GM12878 (cell line): ENCODE measurements at regions of chr16 and their contacts with region 1.

Region 1: GRCh38 chr16:67183627-67184328 is at the start of gene MATCAP1:
- DNase-seq: peak; percentile 91
- ATAC-seq: peak; percentile 96
- H3K4me3 ChIP-seq: peak within 1 kb of the TSS; percentile 76
- H3K27ac ChIP-seq: peak within 1 kb of the TSS; percentile 84
- H3K4me1 ChIP-seq: peaks cover 4% of the 10 kb centered on the region
- H3K27me3 ChIP-seq: peaks cover 0 to 3% of the 10 kb centered on the region in 2 experiments; a peak in 2 of 4 replicates
- CTCF ChIP-seq: no peak
- EP300 ChIP-seq: no peak
- POLR2A ChIP-seq: peak; percentile 76
- RAD21 ChIP-seq: no peak
- polyA plus RNA-seq, gene MATCAP1: 2.8 to 6.6 TPM

Region 2: GRCh38 chr16:66954097-66954659 is 229.6 kb before region 1 on chr16:
- CTCF ChIA-PET with region 1: interaction called, 14 read pairs
- POLR2A ChIA-PET with region 1: no interaction called
- RAD21 ChIA-PET with region 1: interaction called, 3 read pairs
- SMC1A ChIA-PET with region 1: interaction called, 3 read pairs
- in situ Hi-C with region 1: no loop called
- intact Hi-C with region 1: loop called (anchors 1 kb)
- DNase-seq: peak; percentile 45
- ATAC-seq: peak; percentile 82
- H3K4me3 ChIP-seq: no peak overlapping the region
- H3K27ac ChIP-seq: no peak overlapping the region
- H3K4me1 ChIP-seq: peaks cover 9% of the 10 kb centered on the region
- H3K27me3 ChIP-seq: no peaks in the 10 kb centered on the region
- CTCF ChIP-seq: peak; percentile 76 to 92 (median 90)
- EP300 ChIP-seq: no peak
- POLR2A ChIP-seq: no peak
- RAD21 ChIP-seq: peak; percentile 90